Aorta (tissue), 5 donors: ENCODE measurements at regions of chr11 and their contacts with region 1.

Region 1: DNA sequence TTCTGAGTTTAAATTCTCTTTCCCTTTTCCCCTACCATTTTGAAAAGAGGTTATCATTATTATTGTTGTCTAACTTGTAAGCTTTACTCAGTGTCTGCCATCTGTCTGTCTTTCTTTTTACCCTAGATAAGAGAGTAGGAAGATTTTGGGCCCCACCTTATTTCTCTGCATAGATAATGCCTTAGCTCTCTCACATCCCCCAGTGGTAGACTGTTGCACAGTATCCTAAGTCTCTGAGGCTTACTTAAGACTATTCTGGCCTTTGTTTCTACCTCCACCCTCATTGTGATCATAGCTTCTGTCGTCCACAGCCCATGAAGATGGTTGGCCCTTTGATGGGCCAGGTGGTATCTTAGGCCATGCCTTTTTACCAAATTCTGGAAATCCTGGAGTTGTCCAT is 3.6 kb upstream of the OR51L1 start:
- DNase-seq: no peak
- ATAC-seq: no peak
- H3K4me3 ChIP-seq: no peak overlapping the region
- H3K27ac ChIP-seq: no peak overlapping the region
- H3K4me1 ChIP-seq: no peaks in the 10 kb centered on the region
- H3K27me3 ChIP-seq: no peaks in the 10 kb centered on the region

Region 2: DNA sequence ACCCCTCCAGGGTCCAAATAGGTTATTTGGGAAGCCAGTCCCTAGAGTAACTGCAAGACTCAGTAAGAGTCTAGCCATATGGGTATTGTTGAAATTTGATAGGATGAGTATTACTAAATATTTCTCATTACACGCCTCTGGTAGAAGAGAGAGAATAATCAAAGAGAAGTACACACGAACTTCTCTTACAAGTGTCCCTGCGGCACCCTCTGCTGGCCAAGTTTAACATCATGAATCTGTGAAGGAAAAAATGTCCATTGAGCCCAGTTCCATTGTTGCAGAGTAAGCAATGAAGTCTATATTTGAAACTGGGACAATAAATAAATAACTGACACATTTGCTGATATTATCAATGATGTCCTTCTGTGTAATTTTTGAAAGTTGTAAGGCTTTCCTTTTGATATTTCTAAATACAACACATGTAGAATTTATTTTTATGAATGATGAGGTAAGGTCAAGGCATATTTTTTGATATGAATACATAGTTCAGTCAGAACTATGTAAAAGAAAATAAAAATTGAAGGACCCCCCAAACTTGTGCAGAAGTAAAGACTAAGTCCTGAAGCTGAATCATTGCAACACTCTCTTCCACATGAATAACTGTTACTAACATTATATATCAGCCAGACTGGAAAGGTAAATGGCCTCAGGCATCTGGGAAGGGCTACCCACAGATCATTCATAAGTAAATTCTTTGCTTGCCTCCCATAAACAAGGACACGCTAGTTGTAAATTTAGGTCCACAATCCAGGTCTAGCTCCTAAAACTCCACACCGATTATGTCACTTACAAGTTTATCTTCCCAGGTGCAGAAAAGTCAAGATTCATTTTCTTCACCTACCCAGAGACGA is 13.6 kb after region 1 on chr11:
- intact Hi-C with region 1: loop called in 1 of 2 experiments (anchors 1 kb)
- DNase-seq: no peak
- ATAC-seq: no peak
- H3K4me3 ChIP-seq: no peak overlapping the region
- H3K27ac ChIP-seq: no peak overlapping the region
- H3K4me1 ChIP-seq: no peaks in the 10 kb centered on the region
- H3K27me3 ChIP-seq: no peaks in the 10 kb centered on the region

Region 3: DNA sequence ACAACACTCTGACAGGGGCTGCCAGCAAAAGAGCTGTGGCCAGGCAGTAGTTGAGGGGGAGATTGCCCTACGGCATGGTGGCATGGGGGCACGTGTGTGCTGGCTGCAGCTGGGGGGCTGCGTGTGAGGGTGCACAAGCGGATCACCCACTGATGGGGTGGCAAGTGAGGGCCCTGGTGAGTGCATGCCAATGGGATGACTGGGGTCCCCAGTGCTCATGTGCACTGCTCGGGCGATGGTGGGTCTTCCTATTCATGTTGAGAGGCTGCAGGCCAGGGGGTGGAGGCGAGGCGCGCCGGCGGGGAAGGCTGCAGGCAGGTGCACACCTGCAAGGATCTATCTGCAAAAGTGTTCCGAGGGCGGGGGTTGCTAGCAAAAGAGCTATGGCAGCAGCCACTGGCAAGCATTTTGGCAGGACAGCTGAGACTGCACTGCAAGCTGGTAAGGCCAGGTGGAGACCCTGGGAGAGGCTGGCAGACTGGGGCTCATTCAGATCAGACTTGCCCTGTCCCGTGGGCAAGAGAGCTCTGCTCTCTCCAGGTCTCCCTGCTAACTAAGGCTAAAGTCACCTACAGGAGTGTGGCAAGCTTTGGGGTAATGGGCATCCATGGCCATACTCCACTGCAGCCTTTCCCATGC is 470.0 kb after region 1 on chr11:
- intact Hi-C with region 1: no loop called
- DNase-seq: peak in 1 of 2 donors; percentile 63
- ATAC-seq: peak; percentile 50
- H3K4me3 ChIP-seq: no peak overlapping the region
- H3K27ac ChIP-seq: no peak overlapping the region
- H3K4me1 ChIP-seq: no peaks in the 10 kb centered on the region
- H3K27me3 ChIP-seq: no peaks in the 10 kb centered on the region